ENCODE measurements at regions of chr15 and their contacts with region 1.

Region 1: GRCh38 chr15:96687388-96688107 is 357.0 kb downstream of the NR2F2 start:
- DNase-seq: no peak
- ATAC-seq: no peak
- H3K4me3 ChIP-seq: no peak overlapping the region
- H3K27ac ChIP-seq: no peak overlapping the region
- H3K4me1 ChIP-seq: no peaks in the 10 kb centered on the region
- H3K27me3 ChIP-seq: peaks cover 0 to 3% (median 0%) of the 10 kb centered on the region in 3 donors
- CTCF ChIP-seq: no peak

Region 2: GRCh38 chr15:96645796-96646195 is 41.8 kb before region 1 on chr15:
- intact Hi-C with region 1: loop called in 1 of 2 experiments (anchors 5 kb)
- DNase-seq: no peak
- ATAC-seq: no peak
- H3K4me3 ChIP-seq: no peak overlapping the region
- H3K27ac ChIP-seq: no peak overlapping the region
- H3K4me1 ChIP-seq: no peaks in the 10 kb centered on the region
- H3K27me3 ChIP-seq: no peaks in the 10 kb centered on the region
- CTCF ChIP-seq: no peak

Region 3: DNA sequence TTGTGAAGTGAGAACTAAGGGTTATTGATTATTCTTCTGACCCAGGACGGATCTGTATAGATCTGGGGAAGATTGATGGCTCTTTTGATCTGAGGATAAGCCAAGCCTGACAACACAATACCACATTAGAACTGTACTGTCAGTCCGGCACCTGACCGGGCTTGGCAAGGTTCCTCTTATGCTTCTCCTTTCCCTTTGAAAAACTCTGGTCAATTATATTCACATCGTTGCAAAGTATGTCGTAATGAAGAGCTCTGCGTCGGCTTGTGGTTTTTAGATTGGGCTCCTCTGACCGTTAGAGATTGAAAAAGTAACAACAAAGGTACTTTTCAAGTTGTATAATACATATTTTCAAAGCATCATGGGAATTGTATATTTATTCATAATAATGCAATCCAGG is 32.7 kb after region 1 on chr15:
- intact Hi-C with region 1: no loop called
- DNase-seq: no peak
- ATAC-seq: no peak
- H3K4me3 ChIP-seq: no peak overlapping the region
- H3K27ac ChIP-seq: no peak overlapping the region
- H3K4me1 ChIP-seq: no peaks in the 10 kb centered on the region
- H3K27me3 ChIP-seq: peaks cover 0 to 2% (median 0%) of the 10 kb centered on the region in 3 donors
- CTCF ChIP-seq: no peak

Region 4: DNA sequence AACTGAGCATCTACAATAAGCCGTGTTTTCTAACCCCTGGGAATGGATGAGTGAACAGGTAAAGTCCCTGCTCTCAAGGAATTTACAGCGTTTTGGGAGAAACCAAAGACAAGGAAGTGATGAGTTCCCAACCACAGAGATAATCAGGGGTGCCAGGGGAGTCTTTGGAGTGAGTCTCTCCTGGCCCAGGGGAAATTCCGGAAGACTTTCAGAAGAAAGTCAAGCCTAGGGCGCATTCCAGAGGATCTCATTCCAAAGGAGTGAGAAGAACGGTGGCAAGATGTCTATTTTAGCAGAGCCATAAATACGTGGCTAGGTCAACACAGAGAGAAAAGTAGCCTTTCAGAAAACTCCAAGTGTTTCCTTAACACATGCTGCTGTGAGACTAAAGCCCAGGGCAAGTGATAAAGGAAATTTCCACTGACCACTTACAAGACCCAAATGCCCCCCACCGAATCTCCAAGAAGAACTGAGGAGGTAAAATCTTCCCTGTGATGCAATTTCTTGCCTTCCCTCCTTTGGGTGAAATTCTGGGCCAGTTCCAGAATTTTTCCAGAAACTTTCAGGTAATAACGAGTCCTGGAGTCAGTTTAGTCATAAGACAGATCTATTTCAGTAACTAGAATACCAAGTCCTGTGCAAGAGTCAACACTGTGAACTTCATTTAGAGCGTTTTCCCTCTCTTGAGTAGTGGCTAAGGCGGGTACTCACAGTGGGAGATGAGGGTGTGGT is 80.3 kb after region 1 on chr15:
- intact Hi-C with region 1: no loop called
- DNase-seq: no peak
- ATAC-seq: no peak
- H3K4me3 ChIP-seq: no peak overlapping the region
- H3K27ac ChIP-seq: no peak overlapping the region
- H3K4me1 ChIP-seq: no peaks in the 10 kb centered on the region
- H3K27me3 ChIP-seq: no peaks in the 10 kb centered on the region
- CTCF ChIP-seq: no peak